ENCODE measurements at regions of chr12 and their contacts with region 1.

Region 1: GRCh38 chr12:29241821-29242591 is 92.9 kb downstream of the FAR2 start:
- DNase-seq: peak; percentile 72
- ATAC-seq: peak; percentile 90
- H3K4me3 ChIP-seq: no peak overlapping the region
- H3K27ac ChIP-seq: peak overlapping the region; percentile 27; the same call in 1 of the 2 replicates
- H3K4me1 ChIP-seq: peaks cover 17% of the 10 kb centered on the region
- H3K27me3 ChIP-seq: no peaks in the 10 kb centered on the region
- CTCF ChIP-seq: no peak; a peak in 1 of 6 replicates
- EP300 ChIP-seq: peak; percentile 8 to 43; a peak in 1 of 4 replicates
- POLR2A ChIP-seq: no peak
- RAD21 ChIP-seq: no peak

Region 2: DNA sequence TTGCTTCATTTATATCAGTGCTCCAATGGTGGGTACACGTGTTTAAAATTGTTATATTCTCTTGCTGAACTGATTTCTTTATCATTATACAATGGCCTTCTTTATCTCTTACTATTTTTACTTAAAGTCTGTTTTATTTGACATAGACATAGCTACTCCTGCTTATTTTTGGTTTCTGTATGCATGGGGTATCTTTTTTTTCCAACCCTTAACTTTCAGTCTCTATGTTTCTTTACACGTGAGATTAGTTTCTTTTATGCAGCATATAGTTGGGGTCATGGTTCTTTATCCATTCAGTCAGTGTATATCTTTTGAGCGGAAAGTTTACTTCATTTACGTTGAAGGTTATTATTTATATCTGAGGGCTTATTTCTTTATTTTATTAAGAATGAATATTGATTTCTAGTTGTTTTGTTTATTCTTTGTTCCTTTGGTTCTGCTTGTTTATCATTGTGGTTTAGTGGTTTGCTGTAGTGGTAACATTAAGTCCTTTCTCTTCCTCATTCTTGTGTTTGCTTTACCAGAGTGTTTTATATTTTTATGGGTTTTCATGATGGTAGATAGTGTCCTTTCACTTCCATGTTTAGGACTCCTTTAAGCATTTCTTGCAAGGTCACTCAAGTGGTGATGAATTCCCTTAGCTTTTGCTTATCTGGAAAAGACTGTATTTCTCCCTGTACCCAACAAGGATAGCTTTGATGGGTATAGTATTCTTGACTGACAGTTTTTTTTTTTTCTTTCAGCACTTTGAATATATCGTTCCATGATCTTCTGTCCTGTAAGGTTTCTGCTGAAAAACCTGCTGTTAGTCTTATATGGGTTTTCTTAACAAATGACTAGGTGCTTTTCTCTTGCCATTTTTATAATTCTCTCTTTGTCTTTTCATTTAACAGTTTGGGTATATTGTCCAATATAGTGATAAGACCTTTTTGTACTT is 131.2 kb before region 1 on chr12:
- CTCF ChIA-PET with region 1: no interaction called
- POLR2A ChIA-PET with region 1: no interaction called
- RAD21 ChIA-PET with region 1: no interaction called
- SMC1A ChIA-PET with region 1: no interaction called
- in situ Hi-C with region 1: no loop called
- intact Hi-C with region 1: no loop called
- DNase-seq: no peak
- ATAC-seq: peak; percentile 41; the same call in 1 of the 3 replicates
- H3K4me3 ChIP-seq: no peak overlapping the region
- H3K27ac ChIP-seq: no peak overlapping the region
- H3K4me1 ChIP-seq: no peaks in the 10 kb centered on the region
- H3K27me3 ChIP-seq: no peaks in the 10 kb centered on the region
- CTCF ChIP-seq: no peak
- EP300 ChIP-seq: no peak
- POLR2A ChIP-seq: no peak
- RAD21 ChIP-seq: no peak

Region 3: GRCh38 chr12:29216797-29217575 is 25.0 kb before region 1 on chr12:
- CTCF ChIA-PET with region 1: no interaction called
- POLR2A ChIA-PET with region 1: no interaction called
- RAD21 ChIA-PET with region 1: interaction called, 11 read pairs
- SMC1A ChIA-PET with region 1: interaction called, 4 read pairs
- in situ Hi-C with region 1: no loop called
- intact Hi-C with region 1: no loop called
- DNase-seq: no peak
- ATAC-seq: no peak
- H3K4me3 ChIP-seq: no peak overlapping the region
- H3K27ac ChIP-seq: no peak overlapping the region
- H3K4me1 ChIP-seq: no peaks in the 10 kb centered on the region
- H3K27me3 ChIP-seq: no peaks in the 10 kb centered on the region; a peak in 1 of 4 replicates
- CTCF ChIP-seq: no peak
- EP300 ChIP-seq: no peak
- POLR2A ChIP-seq: no peak
- RAD21 ChIP-seq: no peak

Measured in GM12878 (cell line).